ENCODE measurements at regions of chr4 and their contacts with region 1.

Region 1: DNA sequence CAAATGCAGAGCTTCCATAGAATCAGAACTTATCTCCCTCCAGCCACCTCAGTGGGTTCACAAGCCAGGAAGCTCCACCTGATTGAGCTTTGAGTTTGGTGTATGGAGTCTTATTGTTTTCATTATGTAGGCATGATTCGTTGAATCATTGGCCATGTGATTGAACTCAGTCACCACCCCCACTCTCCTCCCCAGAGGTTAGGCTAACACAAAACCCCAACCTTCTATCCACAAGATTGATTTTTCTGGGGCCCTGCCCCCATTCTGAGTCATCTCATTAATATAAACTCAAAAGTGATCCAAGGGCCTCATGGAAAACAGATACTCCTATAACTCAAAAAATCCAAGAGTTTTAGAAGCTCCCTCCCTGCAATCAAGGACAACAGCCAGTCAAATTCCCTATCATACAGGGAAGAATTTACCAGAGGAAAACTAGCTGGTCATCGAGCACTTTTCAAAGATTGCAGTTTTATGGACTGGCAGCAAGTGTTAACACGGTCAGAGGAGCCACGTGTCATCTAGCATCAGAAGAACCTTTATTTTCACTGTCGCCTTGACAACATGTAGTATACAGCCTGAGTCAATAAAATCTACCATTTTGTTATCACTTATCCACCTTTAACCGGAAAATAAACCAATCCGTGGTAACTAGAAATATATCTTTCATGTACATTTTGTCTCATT is 35.9 kb upstream of the GUCY1B1 start:
- DNase-seq: no peak
- ATAC-seq: no peak; the same call in 2 of the 3 replicates
- H3K4me3 ChIP-seq: no peak overlapping the region
- H3K27ac ChIP-seq: no peak overlapping the region
- H3K4me1 ChIP-seq: no peaks in the 10 kb centered on the region
- H3K27me3 ChIP-seq: no peaks in the 10 kb centered on the region
- CTCF ChIP-seq: no peak
- EP300 ChIP-seq: no peak
- POLR2A ChIP-seq: no peak
- RAD21 ChIP-seq: no peak

Region 2: GRCh38 chr4:155712846-155713245 is 10.1 kb before region 1 on chr4:
- CTCF ChIA-PET with region 1: interaction called, 6 read pairs
- POLR2A ChIA-PET with region 1: interaction called, 4 read pairs
- RAD21 ChIA-PET with region 1: interaction called, 3 read pairs
- SMC1A ChIA-PET with region 1: interaction called, 48 read pairs
- in situ Hi-C with region 1: no loop called
- intact Hi-C with region 1: no loop called
- DNase-seq: no peak
- ATAC-seq: no peak
- H3K4me3 ChIP-seq: no peak overlapping the region
- H3K27ac ChIP-seq: no peak overlapping the region
- H3K4me1 ChIP-seq: no peaks in the 10 kb centered on the region
- H3K27me3 ChIP-seq: no peaks in the 10 kb centered on the region
- CTCF ChIP-seq: no peak
- EP300 ChIP-seq: no peak
- POLR2A ChIP-seq: no peak
- RAD21 ChIP-seq: no peak

Region 3: GRCh38 chr4:155734065-155734464 is 11.1 kb after region 1 on chr4:
- CTCF ChIA-PET with region 1: interaction called, 16 read pairs
- POLR2A ChIA-PET with region 1: interaction called, 3 read pairs
- RAD21 ChIA-PET with region 1: interaction called, 4 read pairs
- SMC1A ChIA-PET with region 1: interaction called, 14 read pairs
- in situ Hi-C with region 1: no loop called
- intact Hi-C with region 1: no loop called
- DNase-seq: no peak
- ATAC-seq: no peak
- H3K4me3 ChIP-seq: no peak overlapping the region
- H3K27ac ChIP-seq: no peak overlapping the region
- H3K4me1 ChIP-seq: no peaks in the 10 kb centered on the region
- H3K27me3 ChIP-seq: no peaks in the 10 kb centered on the region
- CTCF ChIP-seq: no peak
- EP300 ChIP-seq: no peak
- POLR2A ChIP-seq: no peak
- RAD21 ChIP-seq: no peak

Region 4: GRCh38 chr4:156053174-156053573 is 330.2 kb after region 1 on chr4:
- CTCF ChIA-PET with region 1: no interaction called
- POLR2A ChIA-PET with region 1: no interaction called
- RAD21 ChIA-PET with region 1: no interaction called
- SMC1A ChIA-PET with region 1: no interaction called
- in situ Hi-C with region 1: no loop called
- intact Hi-C with region 1: no loop called
- DNase-seq: no peak
- ATAC-seq: no peak
- H3K4me3 ChIP-seq: no peak overlapping the region
- H3K27ac ChIP-seq: no peak overlapping the region
- H3K4me1 ChIP-seq: no peaks in the 10 kb centered on the region
- H3K27me3 ChIP-seq: no peaks in the 10 kb centered on the region
- CTCF ChIP-seq: no peak
- EP300 ChIP-seq: no peak
- POLR2A ChIP-seq: no peak
- RAD21 ChIP-seq: no peak

Region 5: GRCh38 chr4:156113138-156113765 is 390.3 kb after region 1 on chr4:
- CTCF ChIA-PET with region 1: no interaction called
- POLR2A ChIA-PET with region 1: no interaction called
- RAD21 ChIA-PET with region 1: no interaction called
- SMC1A ChIA-PET with region 1: no interaction called
- in situ Hi-C with region 1: no loop called
- intact Hi-C with region 1: no loop called
- DNase-seq: no peak
- ATAC-seq: peak; percentile 46; the same call in 1 of the 3 replicates
- H3K4me3 ChIP-seq: no peak overlapping the region
- H3K27ac ChIP-seq: no peak overlapping the region
- H3K4me1 ChIP-seq: no peaks in the 10 kb centered on the region
- H3K27me3 ChIP-seq: no peaks in the 10 kb centered on the region
- CTCF ChIP-seq: peak in 1 of 3 experiments; percentile 32; a peak in 2 of 6 replicates
- EP300 ChIP-seq: no peak
- POLR2A ChIP-seq: no peak
- RAD21 ChIP-seq: peak; percentile 39; the same call in 1 of the 2 replicates